Aorta (tissue), 5 donors: ENCODE measurements at regions of chr1 and their contacts with region 1.

Region 1: DNA sequence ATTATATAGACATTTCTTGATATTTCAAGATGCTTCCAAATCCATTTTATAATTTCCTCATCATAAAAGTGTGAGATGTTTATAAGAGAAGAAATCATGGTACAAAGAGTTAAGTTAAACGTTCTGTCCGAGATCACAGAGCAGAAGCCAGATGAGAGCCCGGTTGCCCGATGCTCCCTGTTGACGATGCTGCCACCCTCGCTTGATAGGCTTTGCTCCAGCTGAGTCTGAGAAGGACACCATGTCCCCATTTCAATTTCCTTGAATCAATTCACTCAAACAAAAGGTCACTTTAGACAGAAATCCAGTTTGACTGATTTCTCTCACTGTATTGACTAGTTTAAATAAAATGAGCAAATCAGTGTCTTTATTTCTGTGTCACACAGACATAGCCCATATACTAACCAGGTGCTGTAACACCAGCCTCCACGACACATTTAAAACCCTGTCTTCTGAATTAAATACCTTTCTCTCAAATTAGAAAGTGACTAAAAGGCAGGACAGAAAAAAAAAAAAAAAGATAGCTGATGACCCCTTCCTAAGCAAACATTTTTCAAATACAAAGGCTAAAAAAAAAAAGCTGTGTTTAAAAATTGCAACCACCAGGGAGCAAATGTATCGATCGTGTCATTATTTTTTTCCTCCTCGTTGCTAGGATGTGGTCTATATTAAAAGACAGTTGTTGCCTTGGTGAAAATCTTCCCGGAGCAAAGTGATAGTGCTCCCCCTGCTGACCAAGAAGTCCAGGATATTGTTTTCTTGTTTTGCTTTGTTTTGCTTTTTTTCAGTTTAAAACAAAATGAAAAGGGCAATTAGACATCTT is 35.2 kb downstream of the DNASE2B start:
- DNase-seq: no peak
- ATAC-seq: peak; percentile 90
- H3K4me3 ChIP-seq: no peak overlapping the region
- H3K27ac ChIP-seq: no peak overlapping the region
- H3K4me1 ChIP-seq: no peaks in the 10 kb centered on the region
- H3K27me3 ChIP-seq: no peaks in the 10 kb centered on the region

Region 2: GRCh38 chr1:84758968-84759491 is 325.6 kb after region 1 on chr1:
- intact Hi-C with region 1: loop called in 1 of 2 experiments (anchors 5 kb)
- DNase-seq: peak in 1 of 2 donors; percentile 53
- ATAC-seq: peak; percentile 67
- H3K4me3 ChIP-seq: no peak overlapping the region
- H3K27ac ChIP-seq: no peak overlapping the region
- H3K4me1 ChIP-seq: no peaks in the 10 kb centered on the region
- H3K27me3 ChIP-seq: no peaks in the 10 kb centered on the region